Activated naive CD4-positive, alpha-beta T cell treated with anti-CD3 and anti-CD28 coated beads, Interleukin-2, amount 10 ng/mL, durations not matched to agents 7 days and 5 days (primary cell): ENCODE measurements at regions of chr1 and their contacts with region 1.

Region 1: GRCh38 chr1:224061436-224061835 is 52.5 kb upstream of the FBXO28 start:
- DNase-seq: no peak
- H3K4me3 Mint-ChIP-seq: no peak overlapping the region
- H3K27ac Mint-ChIP-seq: no peak overlapping the region
- H3K4me1 Mint-ChIP-seq: peaks cover 13% of the 10 kb centered on the region
- H3K27me3 Mint-ChIP-seq: peaks cover 16% of the 10 kb centered on the region

Region 2: DNA sequence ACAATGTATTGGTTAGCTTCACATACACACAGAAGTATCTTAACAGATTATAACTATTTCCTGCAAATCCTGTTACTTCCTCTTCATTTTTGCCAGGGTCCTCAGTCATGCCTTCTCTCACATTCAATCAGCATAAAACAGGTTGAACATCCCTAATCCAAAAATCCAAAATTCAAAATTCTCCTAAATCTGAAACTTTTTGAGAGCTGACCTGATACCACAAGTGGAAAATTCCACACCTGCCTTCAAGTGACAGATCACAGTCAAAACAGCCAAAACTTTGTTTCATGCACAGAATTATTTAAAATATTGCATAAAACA is 10.4 kb before region 1 on chr1:
- CTCF ChIA-PET with region 1: interaction called, 10 read pairs
- DNase-seq: no peak
- H3K4me3 Mint-ChIP-seq: no peak overlapping the region
- H3K27ac Mint-ChIP-seq: no peak overlapping the region
- H3K4me1 Mint-ChIP-seq: no peaks in the 10 kb centered on the region
- H3K27me3 Mint-ChIP-seq: peaks cover 6% of the 10 kb centered on the region

Region 3: GRCh38 chr1:224287714-224288113 is 226.3 kb after region 1 on chr1:
- CTCF ChIA-PET with region 1: no interaction called
- DNase-seq: no peak
- H3K4me3 Mint-ChIP-seq: no peak overlapping the region
- H3K27ac Mint-ChIP-seq: no peak overlapping the region
- H3K4me1 Mint-ChIP-seq: no peaks in the 10 kb centered on the region
- H3K27me3 Mint-ChIP-seq: no peaks in the 10 kb centered on the region